ENCODE measurements at regions of chr11 and their contacts with region 1.

Region 1: GRCh38 chr11:35082321-35083182 is 56.4 kb upstream of the CD44 start:
- DNase-seq: peak; percentile 80
- ATAC-seq: peak; percentile 82
- H3K4me3 Mint-ChIP-seq: peak overlapping the region; percentile 79
- H3K27ac Mint-ChIP-seq: peak overlapping the region; percentile 90
- H3K4me1 Mint-ChIP-seq: peaks cover 76% of the 10 kb centered on the region
- H3K27me3 Mint-ChIP-seq: no peaks in the 10 kb centered on the region

Region 2: GRCh38 chr11:35013514-35014233 is 68.9 kb before region 1 on chr11:
- POLR2A ChIA-PET with region 1: interaction called, 13 read pairs
- DNase-seq: no peak
- ATAC-seq: peak; percentile 15
- H3K4me3 Mint-ChIP-seq: peak overlapping the region; percentile 62
- H3K27ac Mint-ChIP-seq: peak overlapping the region; percentile 50
- H3K4me1 Mint-ChIP-seq: peaks cover 30% of the 10 kb centered on the region
- H3K27me3 Mint-ChIP-seq: peaks cover 8% of the 10 kb centered on the region

Region 3: DNA sequence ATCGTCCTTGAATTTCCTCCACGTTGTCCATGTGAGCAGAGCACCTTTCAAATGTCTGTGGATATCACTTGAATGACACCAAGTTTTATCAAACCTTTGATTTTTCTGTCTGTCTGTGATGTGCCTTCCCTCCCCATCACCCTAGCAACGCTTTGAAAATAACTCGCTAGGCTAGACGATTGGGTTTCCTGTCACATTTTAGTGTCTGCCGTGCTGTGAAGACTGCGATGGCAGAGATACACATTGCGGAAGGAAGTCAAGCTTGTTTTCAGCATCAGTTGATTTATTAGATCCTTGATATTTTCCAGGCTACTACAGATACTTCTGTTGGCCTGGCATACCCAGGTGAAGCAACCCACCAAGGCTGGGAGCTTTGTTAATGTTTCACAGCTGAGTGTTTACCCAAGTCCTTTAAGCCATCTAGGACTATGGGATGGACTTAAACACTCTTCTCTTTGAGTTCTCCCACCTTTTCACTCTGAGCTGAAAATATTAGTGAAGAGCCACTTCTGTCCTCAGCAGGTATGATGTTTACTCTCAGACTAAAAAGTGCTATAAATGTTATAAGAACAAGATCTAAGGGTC is 37.2 kb before region 1 on chr11:
- POLR2A ChIA-PET with region 1: interaction called, 12 read pairs
- DNase-seq: peak; percentile 42
- ATAC-seq: peak; percentile 81
- H3K4me3 Mint-ChIP-seq: peak overlapping the region; percentile 86
- H3K27ac Mint-ChIP-seq: peak overlapping the region; percentile 90
- H3K4me1 Mint-ChIP-seq: peaks cover 55% of the 10 kb centered on the region
- H3K27me3 Mint-ChIP-seq: no peaks in the 10 kb centered on the region

Region 4: GRCh38 chr11:35165423-35166368 is 83.1 kb after region 1 on chr11:
- POLR2A ChIA-PET with region 1: interaction called, 11 read pairs
- DNase-seq: peak; percentile 79
- ATAC-seq: peak; percentile 68
- H3K4me3 Mint-ChIP-seq: peak overlapping the region; percentile 81
- H3K27ac Mint-ChIP-seq: peak overlapping the region; percentile 97
- H3K4me1 Mint-ChIP-seq: peaks cover 88% of the 10 kb centered on the region
- H3K27me3 Mint-ChIP-seq: no peaks in the 10 kb centered on the region